ENCODE measurements at regions of chr11 and their contacts with region 1.

Region 1: GRCh38 chr11:64225612-64226506 is at the starts of genes NUDT22 and TRPT1:
- DNase-seq: peak; percentile 80 to 90
- ATAC-seq: peak; percentile 77 to 83
- H3K4me3 ChIP-seq: peak within 1 kb of the TSS; percentile 97
- H3K27ac ChIP-seq: peak within 1 kb of the TSS; percentile 93 to 99
- H3K4me1 ChIP-seq: peaks cover 30% of the 10 kb centered on the region
- CTCF ChIP-seq: peak; percentile 28; the same call in 2 of the 3 replicates
- EP300 ChIP-seq: no peak
- POLR2A ChIP-seq: peak; percentile 67
- RAD21 ChIP-seq: 0 out of 5 replicates have a peak, but pooled peaks of 1 of the 2 experiments have one; percentile 14
- polyA plus RNA-seq, gene NUDT22: 21.5 and 21.7 TPM in 2 replicates
- polyA plus RNA-seq, gene TRPT1: 18.6 and 25.2 TPM in 2 replicates

Region 2: DNA sequence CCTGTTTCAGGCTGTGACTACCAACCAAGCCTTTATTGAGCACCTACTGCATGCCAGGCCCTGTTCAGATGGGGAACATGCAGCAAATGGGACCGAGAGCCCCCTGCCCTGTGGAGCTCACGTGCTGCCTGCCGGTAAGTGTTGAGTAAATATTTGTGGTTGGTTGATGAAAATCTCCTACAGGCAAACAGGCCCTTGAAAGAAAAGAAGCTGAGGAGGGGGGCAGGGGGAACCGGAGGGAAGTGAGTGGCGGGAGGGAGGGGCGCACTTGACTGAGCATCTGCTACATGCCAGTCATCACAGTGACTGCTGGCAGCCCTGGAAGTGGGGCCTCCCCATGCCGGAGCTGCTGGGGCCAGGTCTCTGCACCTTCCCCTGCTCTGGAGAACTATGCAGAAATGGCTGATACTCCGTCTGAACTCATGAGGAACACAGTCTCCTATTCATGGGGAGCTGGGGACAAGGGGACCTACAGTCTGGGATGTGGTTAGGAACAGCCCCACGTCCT is 94.1 kb before region 1 on chr11:
- CTCF ChIA-PET with region 1: no interaction called
- POLR2A ChIA-PET with region 1: no interaction called
- DNase-seq: no peak
- ATAC-seq: no peak
- H3K4me3 ChIP-seq: no peak overlapping the region
- H3K27ac ChIP-seq: no peak overlapping the region
- H3K4me1 ChIP-seq: peaks cover 5% of the 10 kb centered on the region; the same call in 2 of the 3 replicates
- CTCF ChIP-seq: no peak
- EP300 ChIP-seq: no peak
- POLR2A ChIP-seq: no peak
- RAD21 ChIP-seq: no peak

Region 3: GRCh38 chr11:64173616-64174355 is 52.1 kb before region 1 on chr11:
- CTCF ChIA-PET with region 1: no interaction called
- POLR2A ChIA-PET with region 1: no interaction called
- DNase-seq: no peak
- ATAC-seq: peak; percentile 56 to 65; a peak in 4 of 6 replicates
- H3K4me3 ChIP-seq: no peak overlapping the region
- H3K27ac ChIP-seq: no peak overlapping the region
- H3K4me1 ChIP-seq: no peaks in the 10 kb centered on the region
- CTCF ChIP-seq: no peak
- EP300 ChIP-seq: no peak
- POLR2A ChIP-seq: no peak
- RAD21 ChIP-seq: no peak

Region 4: DNA sequence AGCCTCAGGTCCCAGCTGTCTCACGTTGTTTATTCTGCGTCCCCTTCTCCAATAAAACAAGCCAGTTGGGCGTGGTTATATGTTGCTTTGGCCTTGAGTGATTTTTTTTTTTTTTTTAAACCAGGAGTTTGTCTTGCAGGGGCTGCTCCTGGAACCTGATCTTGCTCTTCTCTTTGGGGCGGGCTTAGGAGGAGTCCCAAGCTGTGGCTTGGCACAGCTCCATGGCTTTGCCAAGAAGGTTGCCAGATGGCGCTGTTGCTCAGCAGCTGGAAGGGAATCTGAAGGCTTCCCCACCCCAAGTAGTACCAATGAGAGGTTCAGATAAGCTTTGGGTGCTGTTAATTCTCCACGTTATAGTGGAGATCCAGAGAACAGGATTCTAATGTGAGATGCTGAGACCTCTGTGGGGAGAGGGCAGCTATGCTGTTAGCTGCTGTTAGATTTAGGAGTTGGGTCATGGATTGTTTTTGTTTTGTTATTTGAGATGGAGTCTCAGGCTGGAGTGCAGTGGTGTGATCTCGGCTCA is 21.3 kb before region 1 on chr11:
- CTCF ChIA-PET with region 1: interaction called, 254 read pairs
- POLR2A ChIA-PET with region 1: interaction called, 6 read pairs
- DNase-seq: peak; percentile 89 to 94
- ATAC-seq: peak; percentile 55 to 83
- H3K4me3 ChIP-seq: no peak overlapping the region
- H3K27ac ChIP-seq: no peak overlapping the region
- H3K4me1 ChIP-seq: peaks cover 9% of the 10 kb centered on the region; the same call in 1 of the 3 replicates
- CTCF ChIP-seq: peak; percentile 77
- EP300 ChIP-seq: no peak
- POLR2A ChIP-seq: no peak
- RAD21 ChIP-seq: peak; percentile 62 to 80

Region 5: DNA sequence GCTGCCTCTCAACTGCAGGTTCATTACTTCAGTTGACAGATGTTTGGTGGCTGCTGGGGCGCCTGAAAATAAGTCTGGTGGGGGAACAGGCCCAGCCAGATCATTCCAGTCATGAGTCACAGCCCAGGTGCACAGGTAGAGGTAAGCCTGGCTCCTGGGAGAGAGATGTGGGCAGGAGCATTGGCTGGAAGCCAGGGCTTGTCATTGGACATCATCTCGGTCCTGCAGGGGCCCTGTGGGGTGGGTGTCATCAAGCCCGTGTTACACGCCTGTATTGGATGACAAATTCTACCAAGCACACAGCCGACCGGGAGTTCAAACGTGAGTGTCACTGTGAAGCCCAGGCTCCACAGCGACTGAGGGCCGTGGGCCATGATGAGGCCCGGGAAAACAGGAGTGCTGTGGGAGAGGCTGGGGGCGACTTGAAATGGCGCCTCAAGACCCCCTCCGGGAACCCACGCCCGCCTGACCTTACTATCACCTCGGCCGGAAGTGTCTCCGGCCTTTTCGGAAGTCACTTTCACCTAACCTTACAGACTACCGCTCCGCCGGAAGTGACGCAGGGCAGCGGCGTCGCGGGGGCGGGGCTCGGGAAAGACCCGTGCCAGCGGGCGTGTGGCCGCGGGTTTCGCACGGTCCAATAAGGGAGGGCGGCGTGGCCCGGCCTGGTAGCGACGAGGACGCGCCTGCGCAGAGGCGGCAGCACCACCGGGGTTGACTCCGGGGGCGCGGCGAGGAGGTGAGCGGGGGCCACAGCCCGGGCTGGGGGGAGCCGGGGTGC is 14.7 kb after region 1 on chr11 and contains the start of gene FKBP2:
- CTCF ChIA-PET with region 1: interaction called, 12 read pairs
- POLR2A ChIA-PET with region 1: interaction called, 11 read pairs
- DNase-seq: peak; percentile 94 to 98
- ATAC-seq: peak; percentile 41 to 64
- H3K4me3 ChIP-seq: peak within 1 kb of the TSS; percentile 73
- H3K27ac ChIP-seq: peak within 1 kb of the TSS; percentile 91 to 98
- H3K4me1 ChIP-seq: peaks cover 44% of the 10 kb centered on the region
- CTCF ChIP-seq: no peak
- EP300 ChIP-seq: no peak
- POLR2A ChIP-seq: peak; percentile 66
- RAD21 ChIP-seq: no peak
- polyA plus RNA-seq, gene FKBP2: 40.5 and 41.4 TPM in 2 replicates

Region 6: GRCh38 chr11:64386306-64386702 is 160.4 kb after region 1 on chr11:
- CTCF ChIA-PET with region 1: no interaction called
- POLR2A ChIA-PET with region 1: no interaction called
- DNase-seq: peak in 1 of 2 experiments; percentile 39
- ATAC-seq: no peak
- H3K4me3 ChIP-seq: no peak overlapping the region
- H3K27ac ChIP-seq: no peak overlapping the region
- H3K4me1 ChIP-seq: peaks cover 7% of the 10 kb centered on the region; the same call in 1 of the 3 replicates
- CTCF ChIP-seq: no peak
- EP300 ChIP-seq: no peak
- POLR2A ChIP-seq: no peak
- RAD21 ChIP-seq: no peak